SK-N-SH (cell line): ENCODE measurements at regions of chr7 and their contacts with region 1.

Region 1: DNA sequence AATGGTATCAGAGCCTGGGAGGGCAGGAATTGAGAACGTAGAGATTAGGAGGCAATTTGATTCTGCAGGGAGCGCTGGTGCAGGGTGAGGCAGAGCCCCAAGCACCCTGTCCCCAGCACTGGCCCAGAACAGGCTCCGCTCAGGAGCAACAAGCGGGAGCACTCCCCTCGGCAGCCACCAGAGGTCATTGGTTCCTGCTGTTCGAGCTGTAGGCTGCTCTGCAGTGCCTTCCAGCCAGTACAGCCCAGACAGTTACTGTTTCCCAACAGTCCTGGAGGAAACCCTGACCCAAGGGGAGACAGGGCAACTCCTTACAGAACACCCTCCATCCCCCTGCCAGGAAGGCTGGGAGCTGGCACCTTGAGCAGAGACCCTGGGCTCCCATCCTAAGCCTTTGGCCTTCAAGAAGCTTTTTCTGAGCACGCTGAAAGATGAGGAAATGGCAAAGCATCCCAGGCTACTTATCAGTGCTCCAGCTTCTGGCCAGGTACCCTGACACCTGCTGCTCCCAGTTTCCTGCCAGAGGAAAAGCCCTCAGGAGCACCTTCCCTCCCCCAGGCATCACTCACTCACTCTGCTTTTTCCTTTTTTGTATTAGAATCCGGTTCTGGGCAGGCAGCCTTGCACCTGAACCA is 71.2 kb upstream of the EFCAB10 start:
- DNase-seq: peak; percentile 91
- H3K4me3 ChIP-seq: no peak overlapping the region
- H3K27ac ChIP-seq: no peak overlapping the region
- H3K4me1 ChIP-seq: peaks cover 22 to 36% of the 10 kb centered on the region in 2 experiments
- H3K27me3 ChIP-seq: no peaks in the 10 kb centered on the region
- CTCF ChIP-seq: peak; percentile 93
- EP300 ChIP-seq: no peak
- RAD21 ChIP-seq: peak; percentile 97

Region 2: GRCh38 chr7:105365541-105366534 is 286.6 kb before region 1 on chr7:
- CTCF ChIA-PET with region 1: no interaction called
- POLR2A ChIA-PET with region 1: no interaction called
- DNase-seq: no peak
- H3K4me3 ChIP-seq: no peak overlapping the region
- H3K27ac ChIP-seq: no peak overlapping the region
- H3K4me1 ChIP-seq: peaks cover 3 to 5% of the 10 kb centered on the region in 2 experiments; a peak in 2 of 4 replicates
- H3K27me3 ChIP-seq: no peaks in the 10 kb centered on the region
- CTCF ChIP-seq: no peak
- EP300 ChIP-seq: no peak
- RAD21 ChIP-seq: no peak

Region 3: DNA sequence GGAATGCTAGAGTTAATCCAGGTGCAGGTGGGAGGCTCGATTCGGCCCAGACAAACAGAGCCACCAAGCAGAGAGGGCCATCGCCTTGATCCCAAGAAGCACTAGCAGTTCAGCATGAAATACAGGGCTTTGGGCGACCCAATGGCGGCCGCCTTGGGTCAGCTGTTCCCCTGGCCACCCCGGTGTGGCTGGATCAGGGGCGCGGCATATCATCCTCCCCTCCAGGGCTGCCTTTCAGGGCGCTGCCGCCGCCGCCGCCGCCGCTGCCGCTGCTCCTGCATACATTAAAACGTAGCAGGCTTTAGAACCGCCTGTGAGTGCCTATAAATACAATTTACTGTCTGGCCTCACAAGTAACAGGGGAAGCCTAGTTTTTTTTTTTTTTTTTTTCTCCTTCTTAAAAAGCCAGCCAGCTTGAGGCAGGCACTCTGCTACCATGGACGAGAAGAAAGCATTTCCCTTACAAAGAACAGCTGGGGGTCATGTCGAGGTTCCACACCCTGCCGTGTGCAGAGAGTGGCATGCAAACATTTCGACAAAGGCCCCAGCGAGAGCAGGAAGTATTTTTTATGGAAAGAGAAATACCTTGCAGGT is 13.5 kb before region 1 on chr7:
- CTCF ChIA-PET with region 1: interaction called, 26 read pairs
- POLR2A ChIA-PET with region 1: no interaction called
- DNase-seq: no peak
- H3K4me3 ChIP-seq: no peak overlapping the region
- H3K27ac ChIP-seq: no peak overlapping the region
- H3K4me1 ChIP-seq: peaks cover 0 to 15% of the 10 kb centered on the region in 2 experiments; a peak in 1 of 4 replicates
- H3K27me3 ChIP-seq: no peaks in the 10 kb centered on the region
- CTCF ChIP-seq: no peak
- EP300 ChIP-seq: no peak
- RAD21 ChIP-seq: no peak

Region 4: GRCh38 chr7:105673367-105674142 is 21.1 kb after region 1 on chr7:
- CTCF ChIA-PET with region 1: interaction called, 15 read pairs
- POLR2A ChIA-PET with region 1: interaction called, 3 read pairs
- DNase-seq: no peak
- H3K4me3 ChIP-seq: no peak overlapping the region
- H3K27ac ChIP-seq: peak overlapping the region in 1 of 2 experiments; percentile 5; a peak in 2 of 4 replicates
- H3K4me1 ChIP-seq: peaks cover 0 to 33% of the 10 kb centered on the region in 2 experiments; a peak in 1 of 4 replicates
- H3K27me3 ChIP-seq: no peaks in the 10 kb centered on the region
- CTCF ChIP-seq: no peak
- EP300 ChIP-seq: no peak
- RAD21 ChIP-seq: no peak

Region 5: GRCh38 chr7:105769901-105770628 is 117.6 kb after region 1 on chr7:
- CTCF ChIA-PET with region 1: interaction called, 12 read pairs
- POLR2A ChIA-PET with region 1: no interaction called
- DNase-seq: peak; percentile 37
- H3K4me3 ChIP-seq: no peak overlapping the region
- H3K27ac ChIP-seq: peak overlapping the region; percentile 49 to 72; a peak in 3 of 4 replicates
- H3K4me1 ChIP-seq: peaks cover 25 to 35% of the 10 kb centered on the region in 2 experiments
- H3K27me3 ChIP-seq: no peaks in the 10 kb centered on the region
- CTCF ChIP-seq: no peak
- EP300 ChIP-seq: peak; percentile 50 to 61; a peak in 1 of 4 replicates
- RAD21 ChIP-seq: no peak; the same call in none of the 2 replicates

Region 6: DNA sequence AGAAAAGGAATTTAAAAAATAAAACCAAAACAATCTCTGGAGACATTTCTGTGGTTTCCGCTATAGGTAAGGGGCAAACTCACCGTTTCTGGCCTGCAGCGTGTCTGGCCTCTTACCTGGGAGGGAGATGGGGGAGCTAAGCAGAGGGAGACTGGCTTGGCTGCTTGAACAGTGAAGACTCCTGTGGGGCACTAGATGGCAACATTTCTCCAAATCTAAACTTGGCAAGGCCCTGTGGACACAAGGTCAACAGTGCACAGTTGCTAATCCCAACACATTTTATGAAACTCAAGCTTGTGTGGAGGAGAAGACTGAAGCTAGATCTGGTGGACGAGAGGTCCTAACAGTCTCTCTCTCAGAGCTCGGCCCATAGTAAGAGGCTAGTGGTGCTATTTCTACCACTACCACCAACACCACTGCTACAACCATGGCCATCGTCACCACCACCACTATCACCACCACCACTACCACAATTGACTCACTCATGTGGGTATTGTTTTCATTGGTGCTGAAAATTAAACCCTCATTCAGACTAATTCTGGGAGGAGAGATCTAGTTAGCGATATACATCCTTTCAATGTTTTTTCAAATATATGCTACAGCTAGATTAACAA is 282.2 kb after region 1 on chr7:
- CTCF ChIA-PET with region 1: interaction called, 23 read pairs
- POLR2A ChIA-PET with region 1: no interaction called
- DNase-seq: peak; percentile 65
- H3K4me3 ChIP-seq: no peak overlapping the region
- H3K27ac ChIP-seq: no peak overlapping the region
- H3K4me1 ChIP-seq: peaks cover 20 to 21% of the 10 kb centered on the region in 2 experiments
- H3K27me3 ChIP-seq: no peaks in the 10 kb centered on the region
- CTCF ChIP-seq: peak; percentile 58
- EP300 ChIP-seq: no peak
- RAD21 ChIP-seq: peak; percentile 93

Region 7: GRCh38 chr7:106050011-106050745 is 397.7 kb after region 1 on chr7:
- CTCF ChIA-PET with region 1: interaction called, 18 read pairs
- POLR2A ChIA-PET with region 1: no interaction called
- DNase-seq: peak; percentile 37
- H3K4me3 ChIP-seq: no peak overlapping the region
- H3K27ac ChIP-seq: no peak overlapping the region
- H3K4me1 ChIP-seq: peaks cover 3 to 25% of the 10 kb centered on the region in 2 experiments; a peak in 1 of 4 replicates
- H3K27me3 ChIP-seq: no peaks in the 10 kb centered on the region
- CTCF ChIP-seq: peak; percentile 23
- EP300 ChIP-seq: no peak
- RAD21 ChIP-seq: peak; percentile 19

Region 8: DNA sequence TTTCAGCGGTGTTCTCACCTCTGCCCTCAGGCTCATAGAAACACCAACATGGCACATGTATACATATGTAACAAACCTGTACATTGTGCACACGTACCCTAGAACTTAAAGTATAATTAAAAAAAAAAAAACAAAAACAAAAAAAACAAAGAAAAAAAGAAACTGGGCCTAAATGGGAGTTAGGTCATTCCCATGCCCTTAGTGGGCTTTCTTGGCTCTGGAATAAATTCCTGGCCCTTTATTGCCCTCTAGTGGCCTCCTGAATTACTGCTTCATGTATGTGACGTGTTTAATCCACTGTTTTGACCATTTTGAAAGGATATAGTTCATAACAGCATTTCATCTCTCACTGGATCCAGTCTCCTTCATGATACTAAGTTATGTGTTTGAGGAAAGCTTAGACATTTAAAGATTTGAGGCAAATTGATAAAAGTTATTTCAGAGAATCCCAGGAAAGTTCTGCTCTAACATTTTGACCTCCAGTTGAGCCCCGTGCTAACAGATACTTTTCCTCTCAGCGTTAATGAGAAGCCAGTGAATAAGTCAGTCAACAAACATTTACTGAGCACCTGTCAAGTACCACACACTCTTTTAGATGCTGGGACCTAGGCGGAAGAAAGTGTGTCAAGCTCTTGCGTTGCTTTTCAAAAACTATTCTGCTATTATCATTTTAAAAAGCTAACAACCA is 514.3 kb after region 1 on chr7:
- CTCF ChIA-PET with region 1: interaction called, 11 read pairs
- POLR2A ChIA-PET with region 1: no interaction called
- DNase-seq: peak; percentile 73
- H3K4me3 ChIP-seq: no peak overlapping the region; a peak in 1 of 4 replicates
- H3K27ac ChIP-seq: no peak overlapping the region
- H3K4me1 ChIP-seq: no peaks in the 10 kb centered on the region; a peak in 1 of 4 replicates
- H3K27me3 ChIP-seq: no peaks in the 10 kb centered on the region
- CTCF ChIP-seq: peak; percentile 95
- EP300 ChIP-seq: no peak
- RAD21 ChIP-seq: peak; percentile 92